WTC11 (cell line): ENCODE measurements at regions of chr13 and their contacts with region 1.

Region 1: DNA sequence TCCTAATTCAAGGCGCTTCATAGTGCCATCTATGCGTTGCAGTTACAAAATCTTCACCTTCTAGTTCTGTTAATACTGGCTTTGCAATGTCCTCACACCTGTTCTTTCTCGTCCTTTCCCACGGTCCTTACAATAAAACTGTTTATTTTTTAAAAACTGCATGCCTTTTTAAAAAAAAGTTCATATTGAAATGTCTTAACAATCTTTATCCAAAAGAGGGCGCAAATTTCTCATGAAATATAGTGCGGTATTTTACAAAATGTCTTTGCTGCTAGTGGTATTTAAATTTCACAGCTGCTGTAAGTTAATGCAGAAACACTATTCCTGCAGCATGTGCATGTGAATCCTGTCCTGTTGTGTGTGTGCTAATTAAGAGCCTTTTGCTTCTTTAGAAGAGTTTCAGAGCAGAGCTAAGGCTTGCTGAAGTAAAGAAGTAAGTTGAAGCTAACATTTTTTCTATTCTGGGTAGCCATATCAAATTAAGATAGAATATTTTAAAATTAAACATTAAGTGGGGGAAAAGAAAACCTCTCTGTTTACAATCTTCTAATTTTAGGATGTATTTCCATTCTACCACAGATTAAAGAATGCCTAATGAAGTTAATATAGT is 15.8 kb upstream of the CLDN10 start:
- DNase-seq: no peak
- ATAC-seq: no peak
- H3K4me3 Mint-ChIP-seq: no peak overlapping the region
- H3K27ac Mint-ChIP-seq: no peak overlapping the region
- H3K4me1 Mint-ChIP-seq: peaks cover 33% of the 10 kb centered on the region
- H3K27me3 Mint-ChIP-seq: no peaks in the 10 kb centered on the region
- CTCF ChIP-seq: no peak

Region 2: DNA sequence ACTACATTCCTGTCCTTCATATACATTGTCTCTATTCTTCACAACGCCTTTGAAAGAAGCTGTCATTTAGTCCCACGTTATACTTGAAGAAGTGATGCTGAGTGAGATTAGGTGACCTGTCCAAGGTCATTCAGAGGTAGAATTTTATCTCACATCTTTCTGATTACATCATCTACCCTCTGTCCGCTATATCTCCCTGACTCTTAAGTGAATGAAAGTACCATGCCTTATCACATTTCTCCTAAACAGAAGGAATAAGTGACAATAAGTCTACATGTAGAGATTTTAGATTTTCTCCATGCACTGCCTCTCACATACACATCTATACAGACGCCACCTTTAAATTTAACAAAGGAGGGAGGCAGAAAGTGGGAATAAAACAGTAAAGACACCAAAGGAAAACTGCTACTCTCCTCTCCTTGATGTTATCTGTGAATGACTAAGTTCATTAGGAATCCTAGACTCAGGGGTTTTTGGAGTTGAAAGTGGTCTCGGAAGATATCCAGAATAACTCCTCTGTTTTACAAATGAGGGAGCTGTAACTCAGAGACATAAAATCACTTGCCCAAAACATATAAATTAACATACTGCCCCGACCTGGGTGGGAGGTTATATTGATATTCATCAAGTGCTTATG is 10.9 kb after region 1 on chr13:
- CTCF ChIA-PET with region 1: interaction called, 31 read pairs
- POLR2A ChIA-PET with region 1: no interaction called
- DNase-seq: no peak
- ATAC-seq: no peak
- H3K4me3 Mint-ChIP-seq: no peak overlapping the region
- H3K27ac Mint-ChIP-seq: no peak overlapping the region
- H3K4me1 Mint-ChIP-seq: peaks cover 36% of the 10 kb centered on the region
- H3K27me3 Mint-ChIP-seq: no peaks in the 10 kb centered on the region
- CTCF ChIP-seq: no peak

Region 3: DNA sequence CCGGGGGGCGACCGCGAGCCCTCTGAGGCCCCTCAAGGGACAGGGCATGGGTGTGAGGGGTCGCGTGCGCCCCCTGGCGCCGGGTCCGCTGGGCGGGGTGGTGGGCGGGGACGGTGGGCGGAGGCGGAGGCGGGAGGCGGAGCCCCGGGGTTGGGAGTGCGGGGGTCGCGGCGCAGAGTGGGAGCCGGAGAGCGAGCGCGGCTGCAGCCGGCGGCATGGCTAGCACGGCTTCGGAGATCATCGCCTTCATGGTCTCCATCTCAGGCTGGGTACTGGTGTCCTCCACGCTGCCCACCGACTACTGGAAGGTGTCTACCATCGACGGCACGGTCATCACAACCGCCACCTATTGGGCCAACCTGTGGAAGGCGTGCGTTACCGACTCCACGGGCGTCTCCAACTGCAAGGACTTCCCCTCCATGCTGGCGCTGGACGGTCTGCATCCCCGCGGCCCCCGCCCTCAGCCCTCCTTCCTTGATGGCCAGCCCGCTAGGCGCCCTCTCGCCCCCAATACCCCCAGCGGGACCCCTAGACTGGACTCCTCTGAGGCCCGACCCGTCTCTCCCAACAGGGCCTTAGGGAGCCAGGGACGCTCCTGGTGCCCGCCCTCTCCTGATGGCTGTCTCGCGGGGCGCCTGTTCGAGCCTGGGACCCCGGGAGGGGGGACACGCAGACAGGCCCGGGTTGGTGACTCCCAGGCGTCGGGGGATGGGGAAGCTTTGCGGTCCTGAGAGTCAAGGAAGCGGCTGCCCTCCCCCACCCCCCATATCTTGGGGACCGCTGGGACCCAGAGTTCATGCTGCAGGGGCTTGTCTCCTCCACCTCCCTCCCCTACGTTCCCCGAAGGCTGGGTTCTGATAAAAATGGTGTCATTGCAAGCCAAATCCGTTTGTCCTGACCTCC is 16.1 kb after region 1 on chr13 and contains the start of gene CLDN10:
- CTCF ChIA-PET with region 1: interaction called, 31 read pairs
- POLR2A ChIA-PET with region 1: no interaction called
- DNase-seq: peak; percentile 86
- ATAC-seq: peak; percentile 86
- H3K4me3 Mint-ChIP-seq: peak within 1 kb of the TSS; percentile 92
- H3K27ac Mint-ChIP-seq: peak within 1 kb of the TSS; percentile 75
- H3K4me1 Mint-ChIP-seq: peaks cover 48% of the 10 kb centered on the region
- H3K27me3 Mint-ChIP-seq: peaks cover 7% of the 10 kb centered on the region; the same call in 1 of the 2 replicates
- CTCF ChIP-seq: peak; percentile 55; the same call in 1 of the 2 replicates
- total RNA-seq, gene CLDN10: 24.7 to 29.6 TPM (median 29.5 TPM) in 3 replicates